K562 (cell line): ENCODE measurements at regions of chr17 and their contacts with region 1.

Region 1: GRCh38 chr17:56125830-56126819 is 27.1 kb upstream of the ANKFN1 start:
- DNase-seq: peak in 3 of 4 experiments; percentile 11 to 37 (median 12)
- ATAC-seq: 0 out of 3 replicates have a peak, but pooled peaks have one; percentile 37
- H3K4me3 ChIP-seq: no peak overlapping the region
- H3K27ac ChIP-seq: no peak overlapping the region
- H3K4me1 ChIP-seq: no peaks in the 10 kb centered on the region
- H3K27me3 ChIP-seq: no peaks in the 10 kb centered on the region
- CTCF ChIP-seq: peak; percentile 37 to 62 (median 59)
- EP300 ChIP-seq: no peak
- POLR2A ChIP-seq: no peak
- RAD21 ChIP-seq: peak; percentile 49 to 56

Region 2: DNA sequence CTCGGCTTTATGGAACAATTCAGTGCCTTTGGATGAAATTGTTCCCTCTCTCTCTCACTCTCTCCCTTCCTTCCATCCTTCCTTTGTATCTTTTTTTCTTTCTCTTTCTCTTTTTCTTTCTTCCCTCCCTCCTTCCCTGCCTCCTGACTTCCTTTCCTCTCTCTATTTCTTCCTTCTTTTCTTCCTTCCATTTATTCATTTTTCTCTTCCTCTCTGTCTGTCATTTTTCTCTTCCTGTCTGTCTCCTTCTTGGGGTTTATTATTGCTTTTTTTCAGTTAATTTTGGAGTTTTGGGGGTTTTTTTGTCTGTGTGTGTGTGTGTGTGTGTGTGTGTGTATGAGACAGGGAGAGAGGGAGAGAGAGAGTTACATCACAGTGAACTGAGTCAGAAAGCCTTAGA is 20.7 kb before region 1 on chr17:
- CTCF ChIA-PET with region 1: no interaction called
- POLR2A ChIA-PET with region 1: no interaction called
- in situ Hi-C with region 1: no loop called
- intact Hi-C with region 1: no loop called
- DNase-seq: no peak
- ATAC-seq: no peak
- H3K4me3 ChIP-seq: no peak overlapping the region
- H3K27ac ChIP-seq: no peak overlapping the region
- H3K4me1 ChIP-seq: no peaks in the 10 kb centered on the region
- H3K27me3 ChIP-seq: no peaks in the 10 kb centered on the region
- CTCF ChIP-seq: no peak
- EP300 ChIP-seq: no peak
- POLR2A ChIP-seq: no peak
- RAD21 ChIP-seq: no peak

Region 3: DNA sequence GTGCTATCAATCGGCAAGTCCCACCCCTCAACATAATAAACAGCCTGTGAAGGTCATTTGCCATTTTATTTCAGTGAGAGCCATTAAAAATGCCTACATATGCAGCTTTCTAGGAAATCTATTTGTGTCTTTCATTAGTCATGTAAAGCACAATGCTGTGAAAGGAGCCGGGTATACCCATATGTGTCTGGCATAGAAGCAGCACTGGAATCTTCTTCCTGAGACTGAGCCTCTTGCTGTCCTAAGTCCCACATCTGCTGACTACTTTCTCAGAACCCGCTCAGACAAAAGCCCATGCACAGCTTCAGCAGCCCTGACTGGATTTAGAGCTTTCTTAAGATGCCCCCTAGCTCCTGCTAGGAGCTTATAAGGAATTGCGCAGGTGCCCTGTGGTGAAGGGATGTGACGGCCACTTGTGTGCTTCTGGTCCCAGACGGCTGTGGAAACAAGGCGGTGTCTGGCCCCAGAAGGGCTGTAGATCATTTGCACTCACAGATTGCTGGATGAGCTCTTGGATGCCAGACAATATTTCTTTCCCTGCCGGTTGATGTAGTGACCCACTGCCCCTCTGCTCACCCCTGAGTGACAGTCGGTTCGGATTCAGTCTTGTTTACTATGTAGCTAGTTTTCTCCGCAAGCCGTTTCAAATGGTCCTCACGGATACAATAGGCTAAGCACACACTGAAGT is 199.3 kb after region 1 on chr17:
- CTCF ChIA-PET with region 1: no interaction called
- POLR2A ChIA-PET with region 1: no interaction called
- in situ Hi-C with region 1: no loop called
- intact Hi-C with region 1: loop called (anchors 10 kb)
- DNase-seq: no peak
- ATAC-seq: no peak
- H3K4me3 ChIP-seq: no peak overlapping the region
- H3K27ac ChIP-seq: no peak overlapping the region
- H3K4me1 ChIP-seq: no peaks in the 10 kb centered on the region
- H3K27me3 ChIP-seq: no peaks in the 10 kb centered on the region
- CTCF ChIP-seq: no peak
- EP300 ChIP-seq: no peak
- POLR2A ChIP-seq: no peak
- RAD21 ChIP-seq: no peak

Region 4: GRCh38 chr17:56478836-56479447 is 352.8 kb after region 1 on chr17:
- CTCF ChIA-PET with region 1: no interaction called
- POLR2A ChIA-PET with region 1: no interaction called
- in situ Hi-C with region 1: no loop called
- intact Hi-C with region 1: loop called (anchors 5 kb)
- DNase-seq: peak; percentile 11 to 28 (median 15)
- ATAC-seq: peak; percentile 66; the same call in 2 of the 3 replicates
- H3K4me3 ChIP-seq: no peak overlapping the region
- H3K27ac ChIP-seq: no peak overlapping the region
- H3K4me1 ChIP-seq: no peaks in the 10 kb centered on the region
- H3K27me3 ChIP-seq: no peaks in the 10 kb centered on the region
- CTCF ChIP-seq: peak; percentile 14 to 60 (median 58); a peak in 5 of 6 replicates
- EP300 ChIP-seq: no peak
- POLR2A ChIP-seq: no peak
- RAD21 ChIP-seq: peak; percentile 41 to 65